Sigmoid colon (tissue), 7 donors: ENCODE measurements at regions of chr12 and their contacts with region 1.

Region 1: DNA sequence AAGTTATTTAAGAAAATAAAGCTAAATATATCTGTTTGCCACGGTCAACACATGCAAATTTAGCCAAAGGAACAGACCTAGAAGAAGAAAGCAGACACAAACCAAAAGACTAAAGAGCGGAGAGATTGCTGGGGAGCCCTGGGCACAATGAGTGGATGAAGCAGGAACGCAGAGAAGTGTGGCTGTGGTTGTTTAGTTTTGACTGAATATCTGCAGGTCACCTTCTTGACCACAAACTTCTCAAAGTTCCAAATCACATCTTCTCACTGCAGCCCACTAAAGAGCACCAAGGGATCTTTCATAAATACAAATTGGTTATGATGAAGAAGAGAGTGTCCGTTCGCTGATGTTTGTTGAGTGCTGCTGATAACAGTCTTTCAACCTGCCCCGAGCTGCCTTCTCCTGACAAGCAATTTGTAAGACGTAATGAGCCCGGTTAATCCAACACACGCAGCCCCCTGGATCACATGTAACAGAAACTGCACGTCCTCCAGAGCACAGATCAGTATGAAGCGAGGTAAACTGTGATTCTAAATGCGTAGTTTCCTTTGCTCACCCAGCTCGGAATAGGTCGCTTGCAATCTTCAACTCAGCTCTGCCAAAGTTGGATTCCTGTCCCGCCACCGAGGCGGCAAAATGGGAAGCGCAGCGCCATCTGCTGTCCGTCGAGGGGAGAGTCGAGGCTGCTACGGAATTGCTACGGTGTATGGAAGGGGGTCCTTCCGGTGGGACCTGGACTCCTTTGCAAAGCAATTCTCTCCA is 120.8 kb downstream of the GXYLT1 start:
- DNase-seq: peak; percentile 82
- H3K4me3 ChIP-seq: peak overlapping the region in 3 of 4 donors; percentile 34 to 49 (median 47)
- H3K27ac ChIP-seq: no peak overlapping the region
- H3K4me1 ChIP-seq: peaks cover 0 to 6% (median 4%) of the 10 kb centered on the region in 4 donors
- H3K27me3 ChIP-seq: no peaks in the 10 kb centered on the region
- CTCF ChIP-seq: peak; percentile 62 to 95 (median 78)
- EP300 ChIP-seq: no peak
- POLR2A ChIP-seq: no peak

Region 2: DNA sequence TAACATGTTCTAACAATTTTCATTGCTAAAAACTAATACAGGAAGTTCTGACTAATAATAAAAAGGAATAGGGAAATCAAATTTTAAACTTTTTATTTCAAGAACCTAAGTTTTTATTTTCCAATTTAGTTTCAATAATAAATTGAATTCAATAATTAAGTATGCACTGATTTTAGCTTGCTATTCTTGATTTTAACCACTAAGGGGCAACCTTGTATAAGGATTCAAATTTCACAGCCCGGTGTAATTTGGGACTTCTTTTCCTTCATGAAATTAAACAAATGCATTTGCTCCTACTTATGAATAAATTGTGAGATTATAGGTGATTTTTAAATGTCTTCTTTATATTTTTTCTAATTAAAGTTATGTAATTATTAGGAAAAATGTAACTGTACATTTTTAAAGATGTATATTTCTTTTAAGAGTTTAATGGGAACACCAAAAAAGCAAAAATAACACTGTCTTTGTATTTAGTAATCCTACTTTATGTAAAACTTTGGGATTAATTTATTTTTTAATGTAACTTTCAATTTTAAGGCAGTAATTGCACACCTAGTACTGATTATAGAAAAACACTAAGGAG is 1077.2 kb before region 1 on chr12:
- intact Hi-C with region 1: loop called (anchors 1 kb)
- DNase-seq: no peak
- H3K4me3 ChIP-seq: no peak overlapping the region
- H3K27ac ChIP-seq: no peak overlapping the region
- H3K4me1 ChIP-seq: no peaks in the 10 kb centered on the region
- H3K27me3 ChIP-seq: no peaks in the 10 kb centered on the region
- CTCF ChIP-seq: peak; percentile 46 to 66 (median 58)
- EP300 ChIP-seq: no peak
- POLR2A ChIP-seq: no peak

Region 3: GRCh38 chr12:41277116-41277945 is 746.6 kb before region 1 on chr12:
- intact Hi-C with region 1: loop called (anchors 5 kb)
- DNase-seq: no peak
- H3K4me3 ChIP-seq: no peak overlapping the region
- H3K27ac ChIP-seq: no peak overlapping the region
- H3K4me1 ChIP-seq: peaks cover 0 to 29% (median 10%) of the 10 kb centered on the region in 4 donors
- H3K27me3 ChIP-seq: no peaks in the 10 kb centered on the region
- CTCF ChIP-seq: peak; percentile 7 to 52 (median 23)
- EP300 ChIP-seq: no peak
- POLR2A ChIP-seq: no peak

Region 4: DNA sequence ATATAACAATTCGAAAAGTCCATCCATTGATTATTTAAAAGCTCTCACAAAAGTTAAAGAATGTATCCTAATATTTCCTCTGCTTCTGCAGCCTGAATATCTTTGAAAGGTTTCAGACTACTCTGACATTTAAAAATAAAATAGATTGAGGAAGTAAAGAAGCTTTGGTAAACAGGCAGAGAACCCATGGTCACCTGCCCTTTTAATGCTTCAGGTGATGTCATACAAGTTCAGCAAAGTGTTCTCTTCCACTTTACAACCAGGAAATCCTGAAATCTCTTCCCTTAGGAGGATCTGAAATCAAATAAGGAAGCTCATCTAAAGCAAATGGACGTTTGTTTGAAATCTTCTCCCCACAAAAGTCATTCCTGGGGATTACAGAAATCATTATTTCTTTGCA is 513.4 kb before region 1 on chr12:
- intact Hi-C with region 1: no loop called
- DNase-seq: no peak
- H3K4me3 ChIP-seq: no peak overlapping the region
- H3K27ac ChIP-seq: no peak overlapping the region
- H3K4me1 ChIP-seq: peaks cover 0 to 20% (median 0%) of the 10 kb centered on the region in 4 donors
- H3K27me3 ChIP-seq: no peaks in the 10 kb centered on the region
- CTCF ChIP-seq: no peak
- EP300 ChIP-seq: no peak
- POLR2A ChIP-seq: no peak

Region 5: GRCh38 chr12:41684997-41685396 is 338.9 kb before region 1 on chr12:
- intact Hi-C with region 1: loop called (anchors 10 kb)
- DNase-seq: no peak
- H3K4me3 ChIP-seq: no peak overlapping the region
- H3K27ac ChIP-seq: no peak overlapping the region
- H3K4me1 ChIP-seq: no peaks in the 10 kb centered on the region
- H3K27me3 ChIP-seq: no peaks in the 10 kb centered on the region
- CTCF ChIP-seq: peak in 2 of 4 experiments; percentile 19 to 29
- EP300 ChIP-seq: no peak
- POLR2A ChIP-seq: no peak

Region 6: GRCh38 chr12:42129595-42130204 is 105.8 kb after region 1 on chr12:
- intact Hi-C with region 1: no loop called
- DNase-seq: no peak
- H3K4me3 ChIP-seq: no peak overlapping the region
- H3K27ac ChIP-seq: no peak overlapping the region
- H3K4me1 ChIP-seq: peaks cover 0 to 13% (median 3%) of the 10 kb centered on the region in 4 donors
- H3K27me3 ChIP-seq: no peaks in the 10 kb centered on the region
- CTCF ChIP-seq: peak; percentile 70 to 77 (median 75)
- EP300 ChIP-seq: no peak
- POLR2A ChIP-seq: no peak